Left colon (tissue), 2 donors: ENCODE measurements at regions of chr3 and their contacts with region 1.

Region 1: DNA sequence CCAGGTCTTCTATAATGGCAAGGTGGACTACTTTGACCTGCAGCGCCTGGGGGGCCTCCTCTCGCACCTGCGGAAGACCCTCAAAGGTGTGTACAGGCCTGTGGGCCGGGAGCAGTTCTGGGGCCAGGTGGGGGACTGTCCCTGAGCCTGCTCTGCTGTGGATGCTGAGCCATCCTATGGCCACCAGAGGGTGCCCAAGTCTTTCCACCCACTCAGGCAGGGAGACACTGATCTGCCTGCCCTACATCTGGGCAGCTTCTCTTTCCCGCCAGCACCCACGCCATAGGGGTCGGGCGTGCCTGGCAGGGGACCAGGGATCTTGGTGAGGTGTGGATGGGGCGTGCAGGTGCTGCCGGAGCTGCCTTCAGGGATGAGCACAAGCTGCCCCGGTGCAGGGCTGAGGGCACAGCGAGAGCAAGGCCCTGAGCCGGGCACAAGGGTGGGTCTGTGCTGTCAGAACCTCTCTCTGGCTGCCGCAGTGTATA is 14.1 kb downstream of the RNF123 start:
- DNase-seq: peak; percentile 54 to 62
- ATAC-seq: peak; percentile 92

Region 2: GRCh38 chr3:49839193-49839809 is 135.8 kb after region 1 on chr3:
- intact Hi-C with region 1: loop called in 1 of 2 experiments (anchors 5 kb)
- DNase-seq: peak; percentile 73 to 88
- ATAC-seq: peak; percentile 92

Region 3: GRCh38 chr3:49966230-49966942 is 262.9 kb after region 1 on chr3:
- intact Hi-C with region 1: no loop called
- DNase-seq: no peak
- ATAC-seq: no peak